K562 (cell line): ENCODE measurements at regions of chr11 and their contacts with region 1.

Region 1: DNA sequence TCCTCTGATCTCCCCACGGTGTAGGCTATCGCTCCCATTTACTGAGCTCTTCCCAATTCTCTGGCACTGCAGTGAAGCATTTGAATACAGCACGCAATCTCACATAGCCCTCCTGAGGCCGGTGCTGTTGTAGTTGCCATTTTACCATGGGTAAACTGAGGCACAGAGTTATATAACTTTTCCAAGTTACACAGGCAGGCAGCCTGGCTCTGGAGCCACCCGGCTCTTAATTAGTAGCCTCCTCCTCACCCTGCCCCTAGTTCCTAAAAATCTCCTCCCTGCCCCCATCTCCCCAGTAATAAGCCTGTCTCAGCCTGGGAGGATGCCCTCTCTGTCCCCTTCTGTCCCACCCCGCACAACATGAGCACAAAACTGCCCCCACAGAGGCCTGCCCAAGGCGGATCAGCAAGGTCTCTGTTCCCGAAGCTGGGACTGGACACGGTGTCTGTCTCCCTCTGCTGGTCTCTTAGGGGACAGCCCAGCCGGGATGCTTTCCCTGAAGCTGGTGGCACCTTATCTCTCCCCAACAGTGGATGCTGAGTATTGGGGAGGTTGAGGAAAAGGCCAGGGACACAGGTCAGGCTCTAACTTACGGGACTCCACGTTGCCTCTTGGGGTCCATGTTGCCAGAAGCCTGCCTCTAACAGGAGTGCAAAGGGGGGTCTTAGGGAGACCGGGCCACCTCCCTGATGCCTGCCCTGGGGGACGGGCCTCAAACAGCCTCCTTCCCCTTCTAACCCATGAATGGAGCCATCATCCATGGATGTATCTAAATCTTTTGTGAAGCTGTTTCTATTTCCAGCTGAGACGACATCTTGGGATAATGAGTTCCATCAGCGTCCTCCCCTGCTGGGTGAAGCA is 9.1 kb upstream of the CLCF1 start:
- DNase-seq: peak; percentile 68 to 91 (median 78)
- ATAC-seq: peak; percentile 88
- H3K4me3 ChIP-seq: no peak overlapping the region
- H3K27ac ChIP-seq: no peak overlapping the region
- H3K4me1 ChIP-seq: peaks cover 43 to 51% of the 10 kb centered on the region in 2 experiments
- H3K27me3 ChIP-seq: no peaks in the 10 kb centered on the region
- CTCF ChIP-seq: peak; percentile 97 to 99 (median 98)
- EP300 ChIP-seq: peak; percentile 28; the same call in 1 of the 2 replicates
- POLR2A ChIP-seq: no peak
- RAD21 ChIP-seq: peak; percentile 99

Region 2: GRCh38 chr11:67082035-67082791 is 300.3 kb before region 1 on chr11:
- CTCF ChIA-PET with region 1: interaction called, 9 read pairs
- POLR2A ChIA-PET with region 1: no interaction called
- in situ Hi-C with region 1: no loop called
- intact Hi-C with region 1: loop called (anchors 5 kb)
- DNase-seq: peak; percentile 44 to 75 (median 64)
- ATAC-seq: peak; percentile 49
- H3K4me3 ChIP-seq: no peak overlapping the region
- H3K27ac ChIP-seq: no peak overlapping the region
- H3K4me1 ChIP-seq: peaks cover 20 to 25% of the 10 kb centered on the region in 2 experiments; a peak in 4 of 5 replicates
- H3K27me3 ChIP-seq: no peaks in the 10 kb centered on the region
- CTCF ChIP-seq: peak in 2 of 3 experiments; percentile 29 to 47; a peak in 4 of 6 replicates
- EP300 ChIP-seq: no peak
- POLR2A ChIP-seq: no peak
- RAD21 ChIP-seq: peak in 1 of 2 experiments; percentile 55; a peak in 2 of 4 replicates